ENCODE measurements at regions of chr1 and their contacts with region 1.

Region 1: GRCh38 chr1:183281553-183282091 is 95.6 kb downstream of the LAMC2 start:
- DNase-seq: peak; percentile 91 to 96
- H3K4me3 ChIP-seq: no peak overlapping the region
- H3K27ac ChIP-seq: no peak overlapping the region
- H3K4me1 ChIP-seq: peaks cover 14 to 23% (median 18%) of the 10 kb centered on the region in 4 experiments
- H3K27me3 ChIP-seq: no peaks in the 10 kb centered on the region
- CTCF ChIP-seq: peak; percentile 81 to 94 (median 93)
- EP300 ChIP-seq: no peak
- POLR2A ChIP-seq: no peak
- RAD21 ChIP-seq: peak; percentile 95 to 98

Region 2: GRCh38 chr1:183227963-183228649 is 53.5 kb before region 1 on chr1:
- CTCF ChIA-PET with region 1: interaction called, 33 read pairs
- POLR2A ChIA-PET with region 1: no interaction called
- DNase-seq: peak; percentile 41 to 88
- H3K4me3 ChIP-seq: no peak overlapping the region
- H3K27ac ChIP-seq: no peak overlapping the region
- H3K4me1 ChIP-seq: peaks cover 0 to 11% (median 5%) of the 10 kb centered on the region in 4 experiments; a peak in 6 of 7 replicates
- H3K27me3 ChIP-seq: no peaks in the 10 kb centered on the region
- CTCF ChIP-seq: peak; percentile 75 to 91 (median 86)
- EP300 ChIP-seq: no peak
- POLR2A ChIP-seq: no peak
- RAD21 ChIP-seq: peak; percentile 74 to 84

Region 3: DNA sequence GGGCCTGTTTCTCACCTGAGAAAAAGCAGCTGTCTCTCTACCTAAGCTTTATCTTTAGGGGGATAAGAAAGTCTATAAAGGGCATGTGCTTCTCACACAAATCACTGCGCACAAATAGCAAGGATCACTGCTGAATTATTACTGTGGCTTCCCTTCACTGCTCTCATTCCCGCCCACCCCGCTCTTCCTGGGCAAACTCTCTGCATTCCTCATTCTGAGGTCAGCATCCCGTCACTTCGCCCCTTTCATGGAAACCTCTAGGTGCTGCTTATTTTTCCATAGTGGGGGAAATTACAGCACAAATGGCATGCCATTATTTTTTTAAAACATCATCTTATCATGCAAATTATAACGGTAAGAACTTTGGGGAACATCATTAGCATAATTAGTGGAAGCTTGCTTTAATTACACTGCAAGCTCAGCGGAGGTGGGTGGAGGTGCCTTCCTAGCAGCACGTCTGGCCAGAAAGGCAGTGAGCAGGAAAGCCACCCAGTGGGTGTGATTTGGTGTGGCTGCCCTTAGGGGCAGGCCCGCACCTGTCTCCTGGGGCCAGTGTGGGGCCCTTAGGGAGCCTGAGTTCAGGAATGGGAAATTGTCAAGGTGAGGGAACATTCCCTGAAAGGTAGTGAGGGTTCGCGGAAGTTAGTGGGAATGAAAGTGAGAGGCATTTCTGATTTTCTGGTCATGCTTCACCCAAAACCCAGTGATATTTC is 10.3 kb after region 1 on chr1:
- CTCF ChIA-PET with region 1: interaction called, 35 read pairs
- POLR2A ChIA-PET with region 1: interaction called, 3 read pairs
- DNase-seq: peak; percentile 23 to 50
- H3K4me3 ChIP-seq: no peak overlapping the region
- H3K27ac ChIP-seq: no peak overlapping the region
- H3K4me1 ChIP-seq: peaks cover 4 to 21% (median 10%) of the 10 kb centered on the region in 4 experiments
- H3K27me3 ChIP-seq: no peaks in the 10 kb centered on the region
- CTCF ChIP-seq: no peak
- EP300 ChIP-seq: no peak; a peak in 1 of 3 replicates
- POLR2A ChIP-seq: no peak
- RAD21 ChIP-seq: 0 out of 4 replicates have a peak, but pooled peaks of 1 of the 2 experiments have one; percentile 11

Region 4: DNA sequence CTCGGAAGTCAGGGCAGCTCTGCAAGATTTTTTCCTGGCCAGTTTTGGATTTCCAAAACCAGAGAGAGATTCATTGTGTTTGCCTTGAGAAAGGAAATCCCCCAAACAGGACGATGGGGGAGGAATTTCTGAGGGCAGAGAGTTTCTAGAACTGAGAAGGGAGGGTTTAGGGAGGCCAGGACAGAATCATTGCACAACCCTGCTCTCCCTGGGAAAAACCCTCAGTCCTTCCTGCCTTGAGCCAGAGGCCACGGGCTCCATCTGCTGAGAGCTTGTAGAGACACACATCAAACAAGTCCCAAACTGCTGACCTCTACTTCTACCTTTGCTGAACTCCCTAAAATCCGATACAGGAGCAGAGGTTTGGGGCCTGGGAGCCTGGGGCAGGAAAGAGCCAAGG is 36.8 kb after region 1 on chr1:
- CTCF ChIA-PET with region 1: interaction called, 84 read pairs
- POLR2A ChIA-PET with region 1: interaction called, 3 read pairs
- DNase-seq: no peak
- H3K4me3 ChIP-seq: no peak overlapping the region
- H3K27ac ChIP-seq: no peak overlapping the region
- H3K4me1 ChIP-seq: peaks cover 2 to 21% (median 10%) of the 10 kb centered on the region in 4 experiments; a peak in 6 of 7 replicates
- H3K27me3 ChIP-seq: no peaks in the 10 kb centered on the region
- CTCF ChIP-seq: peak; percentile 24 to 52 (median 52)
- EP300 ChIP-seq: no peak; a peak in 1 of 3 replicates
- POLR2A ChIP-seq: no peak
- RAD21 ChIP-seq: peak; percentile 64 to 78

Region 5: DNA sequence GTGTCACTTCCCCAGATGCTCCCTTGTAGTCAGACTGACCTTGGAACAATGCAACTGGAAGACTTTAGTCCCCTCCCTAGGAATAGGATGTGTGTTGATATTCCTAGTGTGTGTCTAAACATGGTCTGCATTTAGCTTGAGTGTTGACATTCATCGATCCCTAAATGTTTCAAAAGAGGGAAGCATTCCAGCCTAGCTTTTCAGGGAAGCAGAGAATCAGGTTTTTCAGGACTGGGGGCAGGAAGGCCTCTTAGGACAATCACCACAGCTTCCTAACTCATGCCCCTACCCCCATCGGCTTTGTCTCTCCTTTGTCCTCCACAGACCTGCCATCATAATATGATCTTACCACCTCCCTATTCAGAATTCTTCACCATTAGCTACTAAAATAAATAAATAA is 93.2 kb after region 1 on chr1:
- CTCF ChIA-PET with region 1: interaction called, 12 read pairs
- POLR2A ChIA-PET with region 1: no interaction called
- DNase-seq: no peak
- H3K4me3 ChIP-seq: no peak overlapping the region
- H3K27ac ChIP-seq: no peak overlapping the region
- H3K4me1 ChIP-seq: no peaks in the 10 kb centered on the region; a peak in 1 of 7 replicates
- H3K27me3 ChIP-seq: no peaks in the 10 kb centered on the region
- CTCF ChIP-seq: no peak
- EP300 ChIP-seq: no peak
- POLR2A ChIP-seq: no peak
- RAD21 ChIP-seq: no peak

Measured in H1 (cell line).